ENCODE measurements at regions of chr2 and their contacts with region 1.

Region 1: DNA sequence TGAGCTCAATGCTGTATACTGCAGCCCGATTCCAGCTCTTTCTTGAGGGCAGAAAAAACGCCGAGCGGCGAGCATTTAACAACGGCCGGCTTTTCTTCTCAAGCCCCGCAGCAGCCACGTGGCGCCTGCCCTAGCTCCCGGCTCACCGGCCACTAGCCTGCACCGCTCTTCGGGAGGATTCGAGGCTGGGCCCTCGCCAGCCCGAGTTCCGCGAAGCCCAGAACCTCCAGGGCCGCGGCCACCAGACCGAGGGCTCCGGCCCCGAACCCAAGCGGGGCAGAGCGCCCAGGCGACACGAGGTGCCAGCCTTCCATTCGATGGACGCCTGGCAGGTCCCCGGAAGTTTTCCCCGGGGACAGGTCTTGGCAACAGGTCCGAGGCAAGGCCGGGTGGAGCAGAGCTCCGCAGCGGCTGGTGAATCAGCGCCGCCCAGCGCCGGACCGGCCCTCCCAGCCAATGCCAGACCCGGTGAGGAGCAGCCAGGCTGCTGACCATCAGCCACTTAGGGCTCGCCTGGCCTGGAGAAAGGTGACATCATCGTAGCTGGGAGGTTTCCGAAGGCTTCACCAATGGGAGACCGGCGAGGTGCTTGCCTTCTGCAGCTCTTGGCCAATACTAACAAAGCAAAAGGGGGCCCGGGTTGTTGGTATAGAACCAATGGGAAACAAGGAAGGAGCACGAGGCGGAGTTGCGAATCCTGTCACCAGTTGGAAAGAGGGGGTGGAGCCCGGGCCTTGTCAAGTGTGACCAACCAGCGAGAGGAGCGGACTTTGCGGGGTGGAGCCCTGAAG is 544 bp upstream of the MXD1 start:
- DNase-seq: peak; percentile 21 to 100 (median 100)
- ATAC-seq: peak; percentile 91 to 92
- H3K4me3 Mint-ChIP-seq: peak overlapping the region; percentile 74 to 90 (median 86)
- H3K27ac Mint-ChIP-seq: peak overlapping the region; percentile 78 to 95 (median 92)
- H3K4me1 Mint-ChIP-seq: peaks cover 3 to 46% (median 27%) of the 10 kb centered on the region in 4 donors
- H3K27me3 Mint-ChIP-seq: no peaks in the 10 kb centered on the region

Region 2: GRCh38 chr2:70070541-70071268 is 156.3 kb after region 1 on chr2:
- POLR2A ChIA-PET with region 1: interaction called, 64 read pairs
- DNase-seq: peak in 9 of 10 donors; percentile 38 to 81 (median 65)
- ATAC-seq: peak; percentile 63 to 68
- H3K4me3 Mint-ChIP-seq: peak overlapping the region; percentile 54 to 86 (median 76)
- H3K27ac Mint-ChIP-seq: peak overlapping the region; percentile 86 to 100 (median 96)
- H3K4me1 Mint-ChIP-seq: peaks cover 17 to 57% (median 52%) of the 10 kb centered on the region in 4 donors
- H3K27me3 Mint-ChIP-seq: no peaks in the 10 kb centered on the region

Region 3: DNA sequence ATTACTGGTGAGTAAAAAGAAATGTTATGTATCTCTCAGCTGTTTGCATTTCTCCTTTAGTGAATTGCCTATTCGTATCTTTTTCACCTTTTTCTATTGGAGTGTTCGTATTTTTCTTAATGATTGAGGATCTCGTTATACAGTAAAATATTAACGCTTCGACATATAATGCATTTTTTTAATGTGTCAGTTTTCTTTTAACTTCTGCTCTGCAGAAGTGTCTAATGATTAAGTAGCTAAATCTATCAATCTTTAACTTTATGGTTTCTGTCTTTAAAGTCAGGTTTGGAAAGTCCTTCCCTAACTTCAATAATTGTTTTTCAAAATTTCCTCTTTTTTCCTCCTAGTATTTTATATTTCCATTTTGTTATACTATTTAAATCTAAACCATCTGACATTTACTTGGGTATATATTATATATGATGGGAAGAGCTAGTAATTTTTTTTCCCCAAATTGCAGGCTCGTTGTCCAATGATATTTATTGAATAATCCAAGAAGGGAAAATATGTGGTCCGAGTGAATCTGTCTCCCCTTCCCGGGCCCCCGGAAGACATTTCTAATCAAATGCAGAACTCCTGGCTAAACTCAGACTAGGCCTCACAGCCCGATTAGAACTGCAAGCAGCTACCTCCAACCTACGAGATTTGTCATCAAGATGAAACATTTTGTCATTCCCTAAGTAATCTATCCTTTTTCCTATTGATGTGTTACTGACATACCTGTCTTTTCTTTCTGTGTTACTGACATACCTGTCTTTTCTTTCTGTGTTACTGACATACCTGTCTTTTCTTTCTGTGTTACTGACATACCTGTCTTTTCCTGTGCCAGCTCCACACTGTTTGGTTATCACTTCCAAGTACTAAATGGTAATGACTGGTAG is 190.1 kb after region 1 on chr2:
- POLR2A ChIA-PET with region 1: interaction called, 13 read pairs
- DNase-seq: peak in 3 of 10 donors; percentile 45 to 69 (median 48)
- ATAC-seq: no peak
- H3K4me3 Mint-ChIP-seq: peak overlapping the region; percentile 76 to 89 (median 84)
- H3K27ac Mint-ChIP-seq: peak overlapping the region; percentile 91 to 99 (median 96)
- H3K4me1 Mint-ChIP-seq: peaks cover 32 to 59% (median 57%) of the 10 kb centered on the region in 4 donors
- H3K27me3 Mint-ChIP-seq: no peaks in the 10 kb centered on the region

Region 4: GRCh38 chr2:70132244-70133126 is 218.1 kb after region 1 on chr2:
- POLR2A ChIA-PET with region 1: interaction called, 124 read pairs
- DNase-seq: peak in 6 of 10 donors; percentile 25 to 72 (median 56)
- ATAC-seq: peak; percentile 55 to 56
- H3K4me3 Mint-ChIP-seq: peak overlapping the region; percentile 83 to 90 (median 88)
- H3K27ac Mint-ChIP-seq: peak overlapping the region; percentile 92 to 100 (median 97)
- H3K4me1 Mint-ChIP-seq: peaks cover 40 to 87% (median 81%) of the 10 kb centered on the region in 4 donors
- H3K27me3 Mint-ChIP-seq: no peaks in the 10 kb centered on the region

Region 5: GRCh38 chr2:70190418-70191243 is 276.3 kb after region 1 on chr2 and contains the start of gene C2orf42:
- POLR2A ChIA-PET with region 1: interaction called, 45 read pairs
- DNase-seq: peak; percentile 83 to 98 (median 96)
- ATAC-seq: peak; percentile 84 to 85
- H3K4me3 Mint-ChIP-seq: peak within 1 kb of the TSS; percentile 88 to 99 (median 96)
- H3K27ac Mint-ChIP-seq: peak within 1 kb of the TSS; percentile 96 to 100 (median 99)
- H3K4me1 Mint-ChIP-seq: peaks cover 9 to 25% (median 21%) of the 10 kb centered on the region in 4 donors
- H3K27me3 Mint-ChIP-seq: no peaks in the 10 kb centered on the region
- polyA plus RNA-seq, gene C2orf42: 19.6 to 31.1 (median 19.9) TPM

Region 6: DNA sequence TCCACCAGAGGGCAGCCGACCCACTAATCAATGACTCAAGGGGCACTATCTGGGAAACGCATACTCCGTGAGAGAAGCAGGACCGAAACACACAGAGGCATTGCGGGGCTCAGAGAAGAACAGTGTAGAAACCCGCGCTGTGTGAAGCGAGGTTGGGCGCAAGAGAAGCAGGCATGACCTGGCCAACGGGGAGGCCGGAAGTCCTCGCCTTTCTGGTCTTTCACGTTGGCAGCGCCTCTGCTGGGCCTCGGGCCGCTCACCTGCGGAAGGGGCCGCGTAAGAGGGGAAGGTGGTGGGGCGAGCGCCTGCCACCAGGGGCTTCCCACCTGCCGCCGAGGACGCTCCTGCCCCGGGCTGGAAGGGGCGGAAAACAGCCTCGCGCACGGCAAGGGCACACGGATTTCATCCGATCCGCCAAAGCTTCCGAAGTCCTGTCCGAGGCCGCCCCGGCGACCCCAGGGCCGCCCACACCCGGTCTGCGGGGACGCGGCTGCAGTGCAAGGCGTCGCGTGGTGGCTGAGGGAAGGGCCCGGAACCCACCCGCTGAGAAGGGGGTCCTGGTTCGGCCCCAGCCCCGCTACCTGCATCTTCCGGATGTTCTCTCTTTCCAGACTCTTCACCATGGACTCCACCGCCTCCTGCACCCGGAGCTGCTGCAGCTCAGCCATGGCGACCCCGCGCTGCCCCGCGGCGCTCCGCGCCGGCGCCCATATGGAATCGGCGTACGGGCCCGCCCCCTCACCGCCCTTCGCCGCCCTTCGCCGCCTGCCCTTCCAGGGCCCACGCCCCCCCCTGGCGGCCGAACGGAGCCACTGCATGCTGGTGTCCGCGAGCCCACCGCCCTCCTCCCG is 387.2 kb after region 1 on chr2 and contains the start of gene FAM136A:
- POLR2A ChIA-PET with region 1: interaction called, 15 read pairs
- DNase-seq: peak; percentile 81 to 95 (median 90)
- ATAC-seq: peak; percentile 90 to 91
- H3K4me3 Mint-ChIP-seq: peak within 1 kb of the TSS; percentile 85 to 93 (median 90)
- H3K27ac Mint-ChIP-seq: peak within 1 kb of the TSS; percentile 22 to 96 (median 93)
- H3K4me1 Mint-ChIP-seq: peaks cover 20 to 31% (median 24%) of the 10 kb centered on the region in 4 donors
- H3K27me3 Mint-ChIP-seq: no peaks in the 10 kb centered on the region
- polyA plus RNA-seq, gene FAM136A: 43.2 to 45.3 (median 44.4) TPM